ENCODE measurements at regions of chr9 and their contacts with region 1.

Region 1: DNA sequence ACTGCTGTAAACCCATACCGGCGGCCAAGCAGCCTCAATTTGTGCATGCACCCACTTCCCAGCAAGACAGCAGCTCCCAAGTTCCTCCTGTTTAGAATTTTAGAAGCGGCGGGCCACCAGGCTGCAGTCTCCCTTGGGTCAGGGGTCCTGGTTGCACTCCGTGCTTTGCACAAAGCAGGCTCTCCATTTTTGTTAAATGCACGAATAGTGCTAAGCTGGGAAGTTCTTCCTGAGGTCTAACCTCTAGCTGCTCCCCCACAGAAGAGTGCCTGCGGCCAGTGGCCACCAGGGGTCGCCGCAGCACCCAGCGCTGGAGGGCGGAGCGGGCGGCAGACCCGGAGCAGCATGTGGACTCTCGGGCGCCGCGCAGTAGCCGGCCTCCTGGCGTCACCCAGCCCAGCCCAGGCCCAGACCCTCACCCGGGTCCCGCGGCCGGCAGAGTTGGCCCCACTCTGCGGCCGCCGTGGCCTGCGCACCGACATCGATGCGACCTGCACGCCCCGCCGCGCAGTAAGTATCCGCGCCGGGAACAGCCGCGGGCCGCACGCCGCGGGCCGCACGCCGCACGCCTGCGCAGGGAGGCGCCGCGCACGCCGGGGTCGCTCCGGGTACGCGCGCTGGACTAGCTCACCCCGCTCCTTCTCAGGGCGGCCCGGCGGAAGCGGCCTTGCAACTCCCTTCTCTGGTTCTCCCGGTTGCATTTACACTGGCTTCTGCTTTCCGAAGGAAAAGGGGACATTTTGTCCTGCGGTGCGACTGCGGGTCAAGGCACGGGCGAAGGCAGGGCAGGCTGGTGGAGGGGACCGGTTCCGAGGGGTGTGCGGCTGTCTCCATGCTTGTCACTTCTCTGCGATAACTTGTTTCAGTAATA is at the start of gene FXN:
- DNase-seq: peak; percentile 86
- ATAC-seq: peak; percentile 93
- H3K4me3 Mint-ChIP-seq: peak within 1 kb of the TSS; percentile 88
- H3K27ac Mint-ChIP-seq: peak within 1 kb of the TSS; percentile 86
- H3K4me1 Mint-ChIP-seq: peaks cover 21% of the 10 kb centered on the region
- H3K27me3 Mint-ChIP-seq: no peaks in the 10 kb centered on the region
- total RNA-seq, gene FXN: 19.9 to 33.9 TPM

Region 2: GRCh38 chr9:68979538-68980314 is 55.9 kb before region 1 on chr9:
- CTCF ChIA-PET with region 1: interaction called, 10 read pairs
- DNase-seq: peak; percentile 70
- ATAC-seq: peak; percentile 78
- H3K4me3 Mint-ChIP-seq: peak overlapping the region; percentile 41
- H3K27ac Mint-ChIP-seq: peak overlapping the region; percentile 90
- H3K4me1 Mint-ChIP-seq: peaks cover 78% of the 10 kb centered on the region
- H3K27me3 Mint-ChIP-seq: no peaks in the 10 kb centered on the region

Region 3: GRCh38 chr9:69019808-69020207 is 15.9 kb before region 1 on chr9:
- CTCF ChIA-PET with region 1: interaction called, 23 read pairs
- DNase-seq: peak; percentile 76
- ATAC-seq: peak; percentile 97
- H3K4me3 Mint-ChIP-seq: no peak overlapping the region
- H3K27ac Mint-ChIP-seq: peak overlapping the region; percentile 84
- H3K4me1 Mint-ChIP-seq: peaks cover 41% of the 10 kb centered on the region
- H3K27me3 Mint-ChIP-seq: peaks cover 31% of the 10 kb centered on the region

Region 4: DNA sequence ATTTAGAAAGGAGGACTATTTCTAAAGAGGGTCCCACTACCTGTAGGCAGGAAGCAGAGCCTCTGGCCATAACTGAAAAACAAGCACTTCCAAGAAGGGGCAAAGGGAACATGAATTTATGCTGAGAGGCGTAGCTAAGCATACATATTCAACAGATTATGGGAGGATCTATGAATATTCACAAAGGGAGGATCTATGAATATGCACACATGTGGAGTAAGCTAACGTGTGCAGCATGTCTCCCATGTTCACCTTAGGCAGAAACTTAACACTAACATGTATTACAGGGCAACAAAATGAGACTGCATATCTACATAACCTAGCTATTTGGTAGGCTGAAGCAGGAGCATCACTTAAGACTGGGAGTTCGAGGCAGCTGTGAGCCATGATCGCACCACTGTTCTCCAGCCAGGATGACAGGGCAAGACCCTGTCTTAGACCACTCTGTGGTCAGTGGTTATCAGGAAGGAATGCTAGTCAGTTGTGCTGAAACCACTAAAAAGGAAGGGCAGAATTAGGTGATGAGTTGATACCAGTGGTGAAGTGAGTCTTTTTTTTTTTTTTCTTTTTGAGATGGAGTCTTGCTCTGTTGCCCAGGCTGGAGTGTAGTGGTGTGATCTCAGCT is 20.6 kb after region 1 on chr9:
- CTCF ChIA-PET with region 1: interaction called, 36 read pairs
- DNase-seq: no peak
- ATAC-seq: no peak
- H3K4me3 Mint-ChIP-seq: no peak overlapping the region
- H3K27ac Mint-ChIP-seq: no peak overlapping the region
- H3K4me1 Mint-ChIP-seq: peaks cover 20% of the 10 kb centered on the region
- H3K27me3 Mint-ChIP-seq: no peaks in the 10 kb centered on the region

Region 5: GRCh38 chr9:69097064-69097463 is 61.4 kb after region 1 on chr9:
- CTCF ChIA-PET with region 1: no interaction called
- DNase-seq: no peak
- ATAC-seq: no peak
- H3K4me3 Mint-ChIP-seq: no peak overlapping the region
- H3K27ac Mint-ChIP-seq: no peak overlapping the region
- H3K4me1 Mint-ChIP-seq: no peaks in the 10 kb centered on the region
- H3K27me3 Mint-ChIP-seq: no peaks in the 10 kb centered on the region

Region 6: DNA sequence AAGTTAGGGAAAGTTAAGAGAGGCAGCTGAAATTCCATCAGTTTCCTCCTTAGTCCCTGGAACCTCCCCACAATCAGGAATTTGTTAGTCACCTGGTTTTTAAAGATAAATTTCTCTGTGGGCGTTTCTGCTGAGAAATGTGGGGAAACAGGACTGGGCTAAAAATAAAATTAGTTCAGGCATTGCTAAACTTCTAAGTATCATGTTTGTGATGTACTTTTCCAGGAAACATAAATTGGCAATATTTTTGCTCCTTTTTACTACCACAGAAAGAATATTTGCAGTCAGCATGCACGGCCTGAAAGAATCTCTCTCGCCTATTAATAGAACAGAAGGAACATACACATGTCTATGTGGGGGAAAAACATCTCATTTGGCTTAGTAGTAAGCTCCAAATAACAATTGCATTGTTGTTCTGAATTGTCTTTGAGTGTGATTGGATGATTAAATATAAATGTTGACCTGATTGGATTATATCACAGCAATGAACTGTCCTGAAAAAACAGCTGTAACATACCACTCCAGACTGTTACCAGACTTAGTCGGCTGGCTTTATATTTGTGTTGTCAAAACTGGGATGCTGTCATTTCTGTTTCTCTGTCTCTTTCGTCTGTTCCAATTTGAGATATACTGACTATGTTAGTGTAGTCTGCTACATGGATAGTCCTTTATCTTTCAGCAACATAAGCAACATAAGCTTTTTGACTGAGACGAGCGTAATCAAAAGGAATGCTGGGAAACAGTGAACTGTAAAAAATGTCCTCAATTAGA is 151.4 kb after region 1 on chr9:
- CTCF ChIA-PET with region 1: interaction called, 33 read pairs
- DNase-seq: no peak
- ATAC-seq: no peak
- H3K4me3 Mint-ChIP-seq: no peak overlapping the region
- H3K27ac Mint-ChIP-seq: no peak overlapping the region
- H3K4me1 Mint-ChIP-seq: peaks cover 22% of the 10 kb centered on the region
- H3K27me3 Mint-ChIP-seq: no peaks in the 10 kb centered on the region

Region 7: DNA sequence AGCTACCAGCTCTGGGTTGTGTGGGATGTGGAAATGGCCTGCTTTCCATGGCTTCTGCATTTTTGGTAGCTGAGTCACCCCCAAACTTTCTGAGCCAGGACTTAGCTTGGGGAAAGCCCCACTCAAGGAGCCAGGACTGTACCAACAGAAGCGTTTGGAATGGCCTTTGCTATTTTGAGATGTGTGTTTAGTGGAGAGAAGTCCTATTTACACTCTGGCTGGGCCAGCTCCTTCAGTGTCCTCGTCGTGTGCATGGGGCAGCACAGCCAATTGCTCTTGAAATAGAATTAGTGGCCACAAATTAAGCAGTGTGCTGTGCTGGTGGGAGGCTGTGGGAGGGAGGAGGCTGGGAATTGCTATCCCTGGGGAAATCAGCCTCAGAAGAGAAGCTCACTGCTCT is 341.0 kb after region 1 on chr9:
- CTCF ChIA-PET with region 1: no interaction called
- DNase-seq: no peak
- ATAC-seq: no peak
- H3K4me3 Mint-ChIP-seq: no peak overlapping the region
- H3K27ac Mint-ChIP-seq: no peak overlapping the region
- H3K4me1 Mint-ChIP-seq: no peaks in the 10 kb centered on the region
- H3K27me3 Mint-ChIP-seq: no peaks in the 10 kb centered on the region